OCI-LY7 (cell line): ENCODE measurements at regions of chr22 and their contacts with region 1.

Region 1: DNA sequence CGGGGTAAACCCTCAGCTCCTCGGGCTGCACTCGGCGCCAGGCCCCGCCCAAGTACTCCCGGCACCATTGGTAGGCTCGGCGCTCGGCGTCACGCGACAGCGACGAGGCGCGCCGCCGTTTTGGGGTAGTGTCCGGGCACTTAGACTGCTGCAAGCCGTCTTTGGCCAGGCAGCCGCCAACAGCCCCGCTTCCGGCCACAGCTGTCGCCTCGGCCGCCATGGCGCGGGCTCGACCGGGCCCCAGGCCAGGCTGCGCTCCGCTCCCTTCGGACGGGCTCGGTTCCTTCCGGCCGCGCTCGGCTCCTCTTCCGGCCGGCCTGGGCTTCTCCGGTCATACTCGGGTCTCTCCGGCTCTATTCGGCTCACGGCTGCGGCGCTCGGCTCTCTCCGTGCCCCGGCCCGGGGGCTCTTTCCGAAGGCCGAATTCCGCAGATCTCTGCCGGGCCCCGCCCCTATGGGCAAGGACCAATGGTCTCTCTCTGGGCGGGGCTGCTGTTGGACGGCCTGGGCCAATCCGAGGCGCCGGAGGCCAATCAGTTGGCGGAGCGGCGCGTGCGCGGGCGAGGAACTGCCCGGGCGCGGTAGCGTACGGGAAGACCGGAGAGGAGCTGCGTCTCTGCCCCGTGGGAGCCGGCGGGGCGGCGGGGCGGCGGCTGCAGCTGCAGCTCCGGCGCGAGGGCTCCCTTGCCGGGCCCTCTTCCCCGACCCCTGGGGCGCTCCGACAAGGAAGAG is at the start of gene CHKB:
- DNase-seq: peak; percentile 99
- H3K4me3 ChIP-seq: peak within 1 kb of the TSS; percentile 95
- H3K27ac ChIP-seq: peak within 1 kb of the TSS; percentile 80
- H3K4me1 ChIP-seq: peaks cover 15% of the 10 kb centered on the region
- CTCF ChIP-seq: no peak; the same call in 1 of the 2 replicates
- total RNA-seq, gene CHKB: 83.8 and 85.8 TPM in 2 replicates

Region 2: DNA sequence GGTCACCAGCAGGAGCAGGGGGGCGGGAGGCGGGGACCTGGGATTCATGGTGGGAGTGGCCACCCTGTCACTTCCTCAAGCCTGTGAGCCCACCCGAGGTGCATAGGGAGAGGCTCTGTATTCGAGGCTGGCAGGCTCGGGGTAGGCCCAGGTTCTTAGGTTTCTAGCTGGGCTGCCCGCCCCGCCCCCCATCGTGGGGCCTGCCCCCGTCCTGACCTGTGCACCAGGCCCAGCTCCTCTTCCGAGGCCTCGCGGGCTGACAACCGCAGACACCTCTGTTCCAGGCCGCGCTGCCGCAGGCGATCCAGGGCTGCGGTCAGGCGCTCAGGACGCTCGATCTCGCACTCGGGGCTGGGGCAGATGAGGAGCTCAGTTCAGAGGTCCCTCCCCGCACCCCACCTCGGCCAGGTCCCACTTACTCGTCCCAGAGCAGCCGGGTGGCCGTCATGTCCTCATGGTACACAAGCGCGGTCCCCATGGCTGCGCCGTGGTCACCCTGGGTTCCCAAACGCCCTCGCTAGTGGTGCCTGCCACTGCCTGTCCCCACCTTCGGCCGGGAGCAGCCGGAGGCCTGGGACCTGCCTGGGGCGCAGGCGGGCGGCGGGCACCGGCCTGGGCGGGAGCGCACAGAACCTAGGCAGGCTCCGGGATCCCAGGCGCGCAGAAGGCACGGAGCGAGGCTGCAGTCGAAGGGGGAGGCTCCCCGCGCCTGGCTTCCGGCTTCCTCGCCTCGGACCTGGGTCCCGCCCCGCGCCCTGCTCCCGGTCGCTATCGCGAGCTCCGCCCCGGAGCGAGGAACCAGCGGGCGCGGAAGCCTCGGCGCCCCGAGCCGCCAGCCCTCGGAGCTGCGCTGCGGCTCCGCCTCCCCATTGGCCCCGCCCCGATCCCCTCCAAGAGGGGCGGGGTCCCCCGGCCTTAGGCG is 331.9 kb before region 1 on chr22 and contains the start of gene HDAC10:
- CTCF ChIA-PET with region 1: no interaction called
- POLR2A ChIA-PET with region 1: no interaction called
- intact Hi-C with region 1: loop called (anchors 5 kb)
- DNase-seq: peak; percentile 91
- H3K4me3 ChIP-seq: peak within 1 kb of the TSS; percentile 81
- H3K27ac ChIP-seq: peak within 1 kb of the TSS; percentile 62
- H3K4me1 ChIP-seq: peaks cover 49% of the 10 kb centered on the region
- CTCF ChIP-seq: no peak
- total RNA-seq, gene HDAC10: 47.4 and 49.4 TPM in 2 replicates

Region 3: DNA sequence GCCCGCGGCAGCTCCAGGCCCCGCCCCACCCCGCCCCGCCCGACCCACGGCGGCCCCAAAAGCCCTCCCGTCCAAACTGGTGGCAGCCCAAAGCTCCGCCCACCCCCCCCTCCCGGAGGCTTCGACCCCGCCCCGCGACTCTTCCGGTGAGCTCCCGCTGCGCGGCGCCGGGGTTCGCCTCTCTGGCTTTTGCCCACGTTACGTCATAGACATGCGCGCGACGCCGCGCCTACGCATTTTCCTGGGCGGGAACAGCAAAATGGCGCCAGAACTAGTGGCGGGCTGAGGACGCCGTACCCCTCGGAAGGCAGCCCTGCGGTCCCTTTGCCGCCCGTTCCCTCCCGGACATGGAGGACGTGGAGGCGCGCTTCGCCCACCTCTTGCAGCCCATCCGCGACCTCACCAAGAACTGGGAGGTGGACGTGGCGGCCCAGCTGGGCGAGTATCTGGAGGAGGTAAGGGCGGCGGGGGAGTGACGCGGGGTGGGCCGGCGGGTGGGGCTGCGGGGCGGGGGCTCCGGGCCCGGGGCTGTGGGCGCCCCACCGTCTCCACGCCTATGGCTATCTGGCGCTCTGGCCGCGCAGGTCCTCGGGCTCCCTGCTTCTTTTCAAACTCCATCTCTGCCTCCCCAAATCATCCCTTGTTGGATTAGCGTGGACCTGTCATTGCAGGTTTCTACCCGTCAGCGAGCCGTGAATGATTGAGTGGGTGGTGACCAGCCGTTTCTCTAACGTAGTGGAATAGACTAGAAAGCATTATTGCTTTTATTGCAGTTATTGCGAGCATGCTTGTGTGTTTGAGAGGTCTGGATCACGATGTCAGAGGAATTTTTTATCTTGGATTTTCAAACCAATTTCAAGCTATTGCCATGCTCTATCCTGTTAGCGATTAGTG is 74.5 kb before region 1 on chr22 and contains the start of gene NCAPH2:
- CTCF ChIA-PET with region 1: no interaction called
- POLR2A ChIA-PET with region 1: no interaction called
- intact Hi-C with region 1: loop called (anchors 2 kb)
- DNase-seq: peak; percentile 99
- H3K4me3 ChIP-seq: peak within 1 kb of the TSS; percentile 100
- H3K27ac ChIP-seq: peak within 1 kb of the TSS; percentile 59
- H3K4me1 ChIP-seq: peaks cover 27% of the 10 kb centered on the region
- CTCF ChIP-seq: no peak
- total RNA-seq, gene NCAPH2: 129 and 151 TPM in 2 replicates

Region 4: GRCh38 chr22:50530877-50531545 is 51.7 kb before region 1 on chr22:
- CTCF ChIA-PET with region 1: no interaction called
- POLR2A ChIA-PET with region 1: no interaction called
- intact Hi-C with region 1: loop called (anchors 2 kb)
- DNase-seq: peak; percentile 90
- H3K4me3 ChIP-seq: peak overlapping the region; percentile 71
- H3K27ac ChIP-seq: peak overlapping the region; percentile 53
- H3K4me1 ChIP-seq: peaks cover 68% of the 10 kb centered on the region
- CTCF ChIP-seq: no peak

Region 5: GRCh38 chr22:50544078-50544745 is 38.5 kb before region 1 on chr22:
- CTCF ChIA-PET with region 1: no interaction called
- POLR2A ChIA-PET with region 1: interaction called, 5 read pairs
- intact Hi-C with region 1: loop called (anchors 2 kb)
- DNase-seq: peak; percentile 66
- H3K4me3 ChIP-seq: no peak overlapping the region
- H3K27ac ChIP-seq: no peak overlapping the region
- H3K4me1 ChIP-seq: peaks cover 57% of the 10 kb centered on the region
- CTCF ChIP-seq: peak; percentile 80

Region 6: GRCh38 chr22:50606165-50606945 is 23.6 kb after region 1 on chr22:
- CTCF ChIA-PET with region 1: no interaction called
- POLR2A ChIA-PET with region 1: no interaction called
- intact Hi-C with region 1: no loop called
- DNase-seq: no peak
- H3K4me3 ChIP-seq: no peak overlapping the region
- H3K27ac ChIP-seq: no peak overlapping the region
- H3K4me1 ChIP-seq: no peaks in the 10 kb centered on the region
- CTCF ChIP-seq: peak; percentile 35; the same call in 1 of the 2 replicates

Region 7: DNA sequence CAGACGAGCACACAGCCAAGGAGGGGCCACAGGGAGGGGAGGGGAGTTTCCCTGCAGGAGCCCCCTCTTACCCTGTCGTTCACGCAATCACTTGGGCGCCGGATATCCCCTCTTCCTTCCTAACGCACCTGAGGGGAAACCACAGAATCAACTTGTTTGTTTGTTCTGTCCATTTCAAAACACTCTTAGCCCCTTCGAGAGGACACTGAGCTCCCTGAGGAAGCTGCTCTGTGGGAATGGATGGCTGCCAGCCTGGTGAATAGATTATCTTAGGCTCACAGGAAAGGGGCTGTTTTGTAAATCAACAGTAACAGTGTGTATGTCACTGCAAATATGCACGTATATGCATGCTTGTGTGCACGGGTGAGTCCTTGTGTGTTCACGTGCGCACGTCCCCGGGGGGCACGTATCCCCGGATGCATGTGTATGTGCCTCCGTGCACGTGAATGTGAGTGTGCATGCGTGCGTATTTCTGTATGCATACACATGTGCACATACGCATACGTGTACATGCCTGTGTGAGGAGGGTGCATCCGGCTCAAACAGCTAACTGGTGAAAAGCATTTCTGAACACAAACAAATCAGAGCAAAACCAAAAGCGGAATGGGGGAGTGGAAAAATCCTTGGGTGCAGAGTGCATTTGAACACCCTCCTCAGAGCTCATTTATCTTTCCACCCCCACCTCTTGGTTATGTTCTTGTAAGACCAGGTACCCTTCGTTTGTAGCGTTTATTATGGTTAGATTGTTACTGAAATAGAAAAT is 38.0 kb after region 1 on chr22:
- CTCF ChIA-PET with region 1: no interaction called
- POLR2A ChIA-PET with region 1: interaction called, 4 read pairs
- intact Hi-C with region 1: loop called (anchors 2 kb)
- DNase-seq: peak; percentile 92
- H3K4me3 ChIP-seq: peak overlapping the region; percentile 67
- H3K27ac ChIP-seq: peak overlapping the region; percentile 82
- H3K4me1 ChIP-seq: peaks cover 37% of the 10 kb centered on the region
- CTCF ChIP-seq: no peak; the same call in 1 of the 2 replicates